CD8-positive, alpha-beta memory T cell (primary cell): ENCODE measurements at regions of chr22 and their contacts with region 1.

Region 1: DNA sequence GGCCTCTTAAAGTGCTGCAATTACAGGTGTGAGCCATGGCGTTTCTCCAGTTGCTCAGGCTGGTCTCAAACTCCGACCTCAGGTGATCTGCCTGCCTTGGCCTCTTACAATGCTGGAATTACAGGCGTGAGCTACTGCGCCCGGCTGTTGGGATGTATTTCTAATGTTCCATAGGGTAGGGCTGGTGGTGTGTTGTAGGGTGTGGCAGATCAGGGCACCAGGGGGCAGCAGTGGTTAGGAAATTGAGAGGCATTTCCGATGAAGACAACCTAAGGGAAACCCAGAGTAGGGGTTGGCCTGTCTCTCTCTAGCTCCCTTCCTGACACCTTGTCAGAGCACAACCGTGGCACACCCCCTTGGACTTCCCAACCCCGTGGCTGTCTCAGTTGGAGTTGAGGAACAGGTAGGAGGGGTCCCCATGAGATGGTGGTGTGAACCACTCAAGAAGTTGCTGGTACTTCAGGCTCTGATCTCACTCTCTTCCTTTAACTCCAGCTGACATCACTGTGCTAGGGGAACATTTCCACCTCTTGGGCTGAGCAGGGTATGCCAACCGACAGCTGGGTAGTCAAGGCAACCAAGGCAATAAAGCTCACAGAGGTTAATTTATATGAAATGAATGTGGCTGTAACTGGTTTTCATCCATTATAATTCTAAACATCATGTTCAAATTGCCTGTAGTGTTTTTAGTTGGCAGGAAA is 33.0 kb downstream of the YWHAH start:
- DNase-seq: peak; percentile 51 to 78 (median 61)
- H3K4me3 ChIP-seq: no peak overlapping the region
- H3K4me3 Mint-ChIP-seq: no peak overlapping the region
- H3K27ac ChIP-seq: no peak overlapping the region
- H3K27ac Mint-ChIP-seq: peak overlapping the region in 1 of 8 donors; percentile 59
- H3K4me1 ChIP-seq: no peaks in the 10 kb centered on the region
- H3K4me1 Mint-ChIP-seq: peaks cover 0 to 6% (median 4%) of the 10 kb centered on the region in 3 donors
- H3K27me3 ChIP-seq: no peaks in the 10 kb centered on the region
- H3K27me3 Mint-ChIP-seq: peaks cover 0 to 6% of the 10 kb centered on the region in 2 donors

Region 2: GRCh38 chr22:31923136-31923535 is 54.2 kb before region 1 on chr22:
- CTCF ChIA-PET with region 1: no interaction called
- POLR2A ChIA-PET with region 1: no interaction called
- DNase-seq: no peak
- H3K4me3 ChIP-seq: no peak overlapping the region
- H3K4me3 Mint-ChIP-seq: no peak overlapping the region
- H3K27ac ChIP-seq: no peak overlapping the region
- H3K27ac Mint-ChIP-seq: no peak overlapping the region
- H3K4me1 ChIP-seq: no peaks in the 10 kb centered on the region
- H3K4me1 Mint-ChIP-seq: no peaks in the 10 kb centered on the region
- H3K27me3 ChIP-seq: no peaks in the 10 kb centered on the region
- H3K27me3 Mint-ChIP-seq: peaks cover 6 to 37% of the 10 kb centered on the region in 2 donors

Region 3: GRCh38 chr22:31991102-31991839 is 14.0 kb after region 1 on chr22:
- CTCF ChIA-PET with region 1: interaction called, 10 read pairs
- POLR2A ChIA-PET with region 1: no interaction called
- DNase-seq: no peak
- H3K4me3 ChIP-seq: no peak overlapping the region
- H3K4me3 Mint-ChIP-seq: no peak overlapping the region
- H3K27ac ChIP-seq: no peak overlapping the region
- H3K27ac Mint-ChIP-seq: no peak overlapping the region
- H3K4me1 ChIP-seq: no peaks in the 10 kb centered on the region
- H3K4me1 Mint-ChIP-seq: no peaks in the 10 kb centered on the region
- H3K27me3 ChIP-seq: no peaks in the 10 kb centered on the region
- H3K27me3 Mint-ChIP-seq: peaks cover 3 to 31% of the 10 kb centered on the region in 2 donors

Region 4: DNA sequence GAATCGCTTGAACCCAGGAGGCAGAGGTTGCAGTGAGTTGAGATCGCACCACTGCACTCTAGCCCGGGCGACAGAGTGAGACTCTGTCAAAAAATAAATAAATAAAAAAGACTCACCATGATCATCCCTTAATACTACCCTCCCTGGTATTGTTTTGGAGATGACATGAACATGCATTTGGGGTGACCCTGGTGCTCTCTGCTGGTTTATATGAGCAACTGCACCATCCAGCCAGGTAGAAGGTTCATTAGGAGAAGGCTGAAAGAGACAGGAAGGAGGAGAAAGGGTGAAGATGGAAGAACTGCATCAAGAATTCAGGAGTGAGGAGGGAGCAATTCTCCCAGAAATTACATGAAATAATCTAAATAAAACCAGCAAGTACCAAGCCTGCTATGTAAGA is 103.6 kb after region 1 on chr22:
- CTCF ChIA-PET with region 1: interaction called, 20 read pairs
- POLR2A ChIA-PET with region 1: no interaction called
- DNase-seq: peak in 3 of 5 donors; percentile 2 to 11 (median 9)
- H3K4me3 ChIP-seq: no peak overlapping the region
- H3K4me3 Mint-ChIP-seq: no peak overlapping the region
- H3K27ac ChIP-seq: no peak overlapping the region
- H3K27ac Mint-ChIP-seq: no peak overlapping the region
- H3K4me1 ChIP-seq: no peaks in the 10 kb centered on the region
- H3K4me1 Mint-ChIP-seq: no peaks in the 10 kb centered on the region
- H3K27me3 ChIP-seq: no peaks in the 10 kb centered on the region
- H3K27me3 Mint-ChIP-seq: peaks cover 7 to 12% of the 10 kb centered on the region in 2 donors

Region 5: DNA sequence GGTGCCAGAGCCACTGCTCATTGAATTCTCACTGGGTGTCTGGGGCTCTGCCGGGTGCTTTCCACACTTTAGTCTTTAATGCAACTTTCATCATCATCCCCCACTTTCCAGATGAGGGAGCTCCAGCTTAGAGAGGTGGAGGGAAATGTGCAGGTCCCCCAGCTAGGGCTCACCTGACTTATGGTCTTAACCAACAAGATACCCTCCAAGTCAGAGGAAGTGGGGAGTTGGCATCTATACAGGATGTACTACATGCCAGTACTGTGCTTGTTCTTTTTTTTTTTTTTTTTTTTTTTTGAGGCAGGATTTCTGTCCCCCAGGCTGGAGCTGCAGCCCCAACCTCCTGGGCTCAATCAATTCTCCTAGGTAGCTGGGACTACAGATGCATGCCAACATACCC is 155.5 kb after region 1 on chr22:
- CTCF ChIA-PET with region 1: no interaction called
- POLR2A ChIA-PET with region 1: no interaction called
- DNase-seq: no peak
- H3K4me3 ChIP-seq: no peak overlapping the region
- H3K4me3 Mint-ChIP-seq: no peak overlapping the region
- H3K27ac ChIP-seq: no peak overlapping the region
- H3K27ac Mint-ChIP-seq: no peak overlapping the region
- H3K4me1 ChIP-seq: peaks cover 10% of the 10 kb centered on the region
- H3K4me1 Mint-ChIP-seq: peaks cover 6 to 8% (median 6%) of the 10 kb centered on the region in 3 donors
- H3K27me3 ChIP-seq: no peaks in the 10 kb centered on the region
- H3K27me3 Mint-ChIP-seq: peaks cover 0 to 4% of the 10 kb centered on the region in 2 donors